ENCODE measurements at regions of chr1 and their contacts with region 1.

Region 1: DNA sequence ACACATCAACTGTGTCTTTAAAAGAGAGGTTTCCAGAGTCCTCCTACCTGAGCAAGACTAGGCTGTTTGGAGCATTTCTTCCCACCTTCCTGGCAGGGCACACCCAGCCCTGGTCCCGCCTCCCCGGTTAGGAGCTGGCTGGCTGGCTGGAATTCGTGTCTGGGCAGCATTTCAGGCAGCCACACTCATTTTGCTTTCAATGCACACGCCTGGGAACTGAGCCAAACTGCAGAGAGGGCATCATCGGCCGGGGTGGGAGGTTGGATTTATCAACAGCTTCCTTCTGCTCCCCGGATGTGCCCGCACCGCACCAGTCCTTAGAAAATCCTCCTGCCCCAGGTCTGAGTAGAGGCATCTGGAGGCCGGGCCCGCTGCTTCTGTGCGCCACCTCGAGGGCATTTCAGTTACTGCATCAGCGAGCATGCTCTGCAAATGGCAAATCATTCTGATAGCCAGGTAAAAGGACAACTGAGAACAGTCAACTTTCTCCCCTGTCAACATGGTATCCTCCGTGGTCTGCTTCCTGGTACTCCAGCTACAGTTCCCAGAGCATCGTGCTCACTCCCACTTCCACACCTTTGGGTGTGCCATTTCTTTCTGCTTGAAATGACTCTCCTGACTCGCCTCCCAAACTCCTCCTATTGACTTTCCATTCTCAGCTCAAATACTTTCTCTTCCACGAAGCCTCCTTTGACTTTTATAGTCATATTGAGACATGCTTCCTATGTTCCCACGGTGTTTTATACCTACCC is 20.6 kb downstream of the TCEA3 start:
- DNase-seq: peak; percentile 80
- ATAC-seq: peak; percentile 92
- H3K4me3 ChIP-seq: no peak overlapping the region
- H3K4me3 Mint-ChIP-seq: no peak overlapping the region
- H3K27ac ChIP-seq: no peak overlapping the region
- H3K27ac Mint-ChIP-seq: no peak overlapping the region
- H3K4me1 ChIP-seq: peaks cover 0 to 5% of the 10 kb centered on the region in 2 donors
- H3K4me1 Mint-ChIP-seq: peaks cover 4% of the 10 kb centered on the region
- H3K27me3 ChIP-seq: peaks cover 0 to 3% (median under 1%) of the 10 kb centered on the region in 4 experiments
- H3K27me3 Mint-ChIP-seq: peaks cover 3% of the 10 kb centered on the region
- CTCF ChIP-seq: peak; percentile 95

Region 2: DNA sequence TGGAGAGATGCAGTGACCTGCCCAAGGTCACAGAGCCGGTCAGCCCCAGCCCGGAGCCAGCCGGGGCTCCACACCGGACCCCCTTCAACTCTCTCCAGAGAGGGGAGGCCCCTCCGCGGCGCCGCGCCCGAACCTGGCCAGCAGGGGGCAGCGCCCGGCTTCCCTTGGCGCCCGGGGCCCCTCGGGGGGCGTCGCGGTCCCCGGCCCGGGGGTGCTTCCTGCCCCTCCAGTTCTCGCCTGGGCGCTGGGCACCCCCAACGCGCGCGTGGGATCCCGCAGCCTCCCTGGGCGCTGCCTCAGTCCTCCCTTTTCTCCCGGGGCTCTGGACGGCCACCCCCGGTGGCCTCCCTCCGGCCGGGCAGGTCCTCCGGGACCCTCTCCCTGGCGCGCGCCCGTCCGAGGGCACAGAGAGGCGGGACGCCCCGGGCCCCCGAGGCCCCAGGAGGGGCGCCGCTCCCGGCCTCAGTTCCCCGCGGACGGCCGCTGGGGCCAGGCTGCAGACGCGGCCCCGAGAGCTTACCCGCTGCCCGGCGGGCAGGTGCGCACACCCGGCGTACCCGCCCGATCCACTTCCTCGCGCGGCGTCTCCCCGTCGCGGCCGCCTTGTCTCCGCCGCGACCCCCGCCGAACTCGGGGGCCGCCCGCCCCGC is 187.0 kb before region 1 on chr1:
- CTCF ChIA-PET with region 1: no interaction called
- POLR2A ChIA-PET with region 1: no interaction called
- intact Hi-C with region 1: loop called (anchors 5 kb)
- DNase-seq: peak; percentile 37
- ATAC-seq: peak; percentile 36
- H3K4me3 ChIP-seq: peak overlapping the region in 3 of 5 experiments; percentile 25 to 45 (median 34)
- H3K4me3 Mint-ChIP-seq: peak overlapping the region; percentile 61
- H3K27ac ChIP-seq: no peak overlapping the region
- H3K27ac Mint-ChIP-seq: no peak overlapping the region
- H3K4me1 ChIP-seq: peaks cover 11 to 16% of the 10 kb centered on the region in 2 donors
- H3K4me1 Mint-ChIP-seq: peaks cover 6% of the 10 kb centered on the region
- H3K27me3 ChIP-seq: peaks cover 0 to 54% (median 29%) of the 10 kb centered on the region in 4 experiments
- H3K27me3 Mint-ChIP-seq: peaks cover 67% of the 10 kb centered on the region
- CTCF ChIP-seq: peak; percentile 77

Region 3: DNA sequence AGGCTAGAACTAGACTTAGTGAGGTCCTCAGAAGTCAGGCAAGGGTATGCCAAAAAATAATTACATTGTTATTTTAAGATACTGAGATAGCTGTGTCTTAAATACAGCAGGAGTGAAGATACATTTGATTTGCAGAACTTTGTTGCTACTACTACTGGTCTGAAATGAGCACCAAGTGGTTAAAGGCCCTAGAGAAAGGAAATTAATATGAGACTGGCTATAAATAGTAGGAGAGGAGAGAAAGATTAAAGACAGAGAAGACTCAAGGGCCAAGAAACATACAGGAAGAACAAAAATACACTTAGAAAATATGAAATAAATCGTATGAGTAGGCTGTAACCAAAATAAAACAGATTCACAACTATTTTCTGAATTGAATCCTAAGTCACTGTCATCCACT is 81.1 kb before region 1 on chr1:
- CTCF ChIA-PET with region 1: no interaction called
- POLR2A ChIA-PET with region 1: no interaction called
- intact Hi-C with region 1: loop called (anchors 5 kb)
- DNase-seq: no peak
- ATAC-seq: no peak
- H3K4me3 ChIP-seq: no peak overlapping the region
- H3K4me3 Mint-ChIP-seq: no peak overlapping the region
- H3K27ac ChIP-seq: peak overlapping the region in 1 of 2 donors; percentile 15
- H3K27ac Mint-ChIP-seq: no peak overlapping the region
- H3K4me1 ChIP-seq: no peaks in the 10 kb centered on the region
- H3K4me1 Mint-ChIP-seq: peaks cover 8% of the 10 kb centered on the region
- H3K27me3 ChIP-seq: no peaks in the 10 kb centered on the region
- H3K27me3 Mint-ChIP-seq: no peaks in the 10 kb centered on the region
- CTCF ChIP-seq: no peak

Region 4: GRCh38 chr1:23344111-23344986 is 59.6 kb before region 1 on chr1 and contains the start of gene HNRNPR:
- CTCF ChIA-PET with region 1: interaction called, 6 read pairs
- POLR2A ChIA-PET with region 1: interaction called, 3 read pairs
- intact Hi-C with region 1: loop called (anchors 2 kb)
- DNase-seq: peak; percentile 99
- ATAC-seq: peak; percentile 94
- H3K4me3 ChIP-seq: peak within 1 kb of the TSS; percentile 78 to 92 (median 87)
- H3K4me3 Mint-ChIP-seq: peak within 1 kb of the TSS; percentile 96
- H3K27ac ChIP-seq: peak within 1 kb of the TSS; percentile 65 to 92
- H3K27ac Mint-ChIP-seq: peak within 1 kb of the TSS; percentile 97
- H3K4me1 ChIP-seq: peaks cover 24 to 40% of the 10 kb centered on the region in 2 donors
- H3K4me1 Mint-ChIP-seq: peaks cover 41% of the 10 kb centered on the region
- H3K27me3 ChIP-seq: no peaks in the 10 kb centered on the region
- H3K27me3 Mint-ChIP-seq: no peaks in the 10 kb centered on the region
- CTCF ChIP-seq: peak; percentile 10
- total RNA-seq, gene HNRNPR: 132 and 142 TPM in 2 replicates

Region 5: GRCh38 chr1:23367791-23368561 is 35.9 kb before region 1 on chr1:
- CTCF ChIA-PET with region 1: interaction called, 6 read pairs
- POLR2A ChIA-PET with region 1: no interaction called
- intact Hi-C with region 1: loop called (anchors 2 kb)
- DNase-seq: peak; percentile 98
- ATAC-seq: peak; percentile 87
- H3K4me3 ChIP-seq: peak overlapping the region; percentile 93 to 100 (median 97)
- H3K4me3 Mint-ChIP-seq: peak overlapping the region; percentile 98
- H3K27ac ChIP-seq: peak overlapping the region; percentile 81 to 85
- H3K27ac Mint-ChIP-seq: peak overlapping the region; percentile 99
- H3K4me1 ChIP-seq: peaks cover 12 to 19% of the 10 kb centered on the region in 2 donors
- H3K4me1 Mint-ChIP-seq: peaks cover 33% of the 10 kb centered on the region
- H3K27me3 ChIP-seq: no peaks in the 10 kb centered on the region
- H3K27me3 Mint-ChIP-seq: no peaks in the 10 kb centered on the region
- CTCF ChIP-seq: no peak

Region 6: DNA sequence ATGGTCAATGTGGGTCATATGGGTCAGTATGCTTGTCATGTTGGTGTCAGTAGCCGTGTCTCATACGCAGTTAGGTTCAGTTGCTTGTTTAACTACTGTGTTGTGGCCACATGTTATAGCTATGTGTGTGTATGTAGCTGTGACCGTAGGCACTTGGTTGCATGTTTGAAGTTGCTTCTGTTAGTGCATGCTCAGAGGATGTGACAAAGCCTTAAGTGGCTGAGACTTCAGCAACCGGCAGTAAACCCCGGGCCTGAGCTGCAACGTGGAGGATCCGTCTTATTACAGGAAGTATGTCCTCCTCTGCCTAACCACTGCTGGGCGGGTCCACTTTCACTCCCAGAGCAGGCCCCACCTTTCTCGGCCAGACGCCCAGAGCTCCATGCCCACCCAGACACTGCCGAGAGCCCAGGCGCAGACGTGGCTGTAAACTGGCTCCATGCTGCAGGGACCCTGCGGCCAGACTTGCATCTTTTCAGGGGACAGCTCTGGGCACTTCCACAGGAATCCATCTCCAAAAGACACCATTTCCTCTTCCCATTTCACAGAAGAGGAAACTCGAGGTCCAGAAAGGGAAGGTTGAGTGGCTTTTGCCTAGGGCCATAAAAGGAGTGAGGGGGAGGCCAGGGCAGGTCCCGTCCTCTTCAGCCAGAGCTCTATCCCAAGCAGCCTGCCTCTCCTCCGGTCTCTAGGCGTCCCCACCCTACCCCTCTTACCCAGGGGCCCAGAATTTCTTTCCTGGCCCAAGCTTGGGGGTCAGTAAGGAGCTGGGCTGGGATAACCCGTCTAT is 18.5 kb after region 1 on chr1:
- CTCF ChIA-PET with region 1: interaction called, 12 read pairs
- POLR2A ChIA-PET with region 1: no interaction called
- intact Hi-C with region 1: no loop called
- DNase-seq: no peak
- ATAC-seq: no peak
- H3K4me3 ChIP-seq: no peak overlapping the region
- H3K4me3 Mint-ChIP-seq: peak overlapping the region; percentile 26
- H3K27ac ChIP-seq: no peak overlapping the region
- H3K27ac Mint-ChIP-seq: no peak overlapping the region
- H3K4me1 ChIP-seq: peaks cover 21 to 27% of the 10 kb centered on the region in 2 donors
- H3K4me1 Mint-ChIP-seq: peaks cover 21% of the 10 kb centered on the region
- H3K27me3 ChIP-seq: peaks cover 0 to 49% (median 27%) of the 10 kb centered on the region in 4 experiments
- H3K27me3 Mint-ChIP-seq: peaks cover 48% of the 10 kb centered on the region
- CTCF ChIP-seq: no peak

Measured in B cell (primary cell).